Mammary epithelial cell (primary cell): ENCODE measurements at regions of chr18 and their contacts with region 1.

Region 1: GRCh38 chr18:48391868-48392267 is 17.3 kb downstream of the ZBTB7C start:
- DNase-seq: no peak
- H3K4me3 ChIP-seq: no peak overlapping the region
- H3K27ac ChIP-seq: no peak overlapping the region
- H3K4me1 ChIP-seq: peaks cover 41% of the 10 kb centered on the region
- H3K27me3 ChIP-seq: no peaks in the 10 kb centered on the region
- CTCF ChIP-seq: no peak

Region 2: DNA sequence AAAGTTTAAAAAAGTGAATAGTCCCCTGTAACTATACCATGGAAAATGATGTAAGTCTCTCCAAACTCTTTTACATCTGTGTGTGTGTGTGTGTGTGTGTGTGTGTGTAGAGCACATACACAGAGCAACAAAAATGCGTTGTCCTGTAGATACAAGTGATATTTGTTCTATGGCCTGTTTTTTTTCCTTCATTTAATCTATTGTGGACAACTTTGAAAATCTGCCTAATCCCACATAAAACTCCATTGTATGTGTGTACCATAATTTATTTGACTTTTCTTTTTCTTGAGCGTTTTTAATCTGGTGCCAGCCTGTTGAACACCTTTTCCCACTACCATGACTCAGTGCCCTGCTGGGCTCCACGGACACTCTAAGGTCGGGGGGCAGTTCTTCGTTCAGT is 1304.2 kb before region 1 on chr18:
- CTCF ChIA-PET with region 1: no interaction called
- dilution Hi-C with region 1: no loop called
- in situ Hi-C with region 1: no loop called
- intact Hi-C with region 1: no loop called
- DNase-seq: no peak
- H3K4me3 ChIP-seq: no peak overlapping the region
- H3K27ac ChIP-seq: no peak overlapping the region
- H3K4me1 ChIP-seq: no peaks in the 10 kb centered on the region
- H3K27me3 ChIP-seq: no peaks in the 10 kb centered on the region
- CTCF ChIP-seq: no peak

Region 3: GRCh38 chr18:48230467-48231113 is 161.3 kb before region 1 on chr18:
- CTCF ChIA-PET with region 1: no interaction called
- dilution Hi-C with region 1: no loop called
- in situ Hi-C with region 1: no loop called
- intact Hi-C with region 1: no loop called
- DNase-seq: peak; percentile 61
- H3K4me3 ChIP-seq: no peak overlapping the region
- H3K27ac ChIP-seq: no peak overlapping the region
- H3K4me1 ChIP-seq: peaks cover 41% of the 10 kb centered on the region
- H3K27me3 ChIP-seq: no peaks in the 10 kb centered on the region
- CTCF ChIP-seq: peak; percentile 82 to 85

Region 4: GRCh38 chr18:48404716-48405507 is 13.0 kb after region 1 on chr18:
- CTCF ChIA-PET with region 1: no interaction called
- dilution Hi-C with region 1: no loop called
- in situ Hi-C with region 1: no loop called
- intact Hi-C with region 1: loop called (anchors 1 kb)
- DNase-seq: peak; percentile 75
- H3K4me3 ChIP-seq: no peak overlapping the region
- H3K27ac ChIP-seq: no peak overlapping the region
- H3K4me1 ChIP-seq: peaks cover 40% of the 10 kb centered on the region
- H3K27me3 ChIP-seq: no peaks in the 10 kb centered on the region
- CTCF ChIP-seq: no peak

Region 5: DNA sequence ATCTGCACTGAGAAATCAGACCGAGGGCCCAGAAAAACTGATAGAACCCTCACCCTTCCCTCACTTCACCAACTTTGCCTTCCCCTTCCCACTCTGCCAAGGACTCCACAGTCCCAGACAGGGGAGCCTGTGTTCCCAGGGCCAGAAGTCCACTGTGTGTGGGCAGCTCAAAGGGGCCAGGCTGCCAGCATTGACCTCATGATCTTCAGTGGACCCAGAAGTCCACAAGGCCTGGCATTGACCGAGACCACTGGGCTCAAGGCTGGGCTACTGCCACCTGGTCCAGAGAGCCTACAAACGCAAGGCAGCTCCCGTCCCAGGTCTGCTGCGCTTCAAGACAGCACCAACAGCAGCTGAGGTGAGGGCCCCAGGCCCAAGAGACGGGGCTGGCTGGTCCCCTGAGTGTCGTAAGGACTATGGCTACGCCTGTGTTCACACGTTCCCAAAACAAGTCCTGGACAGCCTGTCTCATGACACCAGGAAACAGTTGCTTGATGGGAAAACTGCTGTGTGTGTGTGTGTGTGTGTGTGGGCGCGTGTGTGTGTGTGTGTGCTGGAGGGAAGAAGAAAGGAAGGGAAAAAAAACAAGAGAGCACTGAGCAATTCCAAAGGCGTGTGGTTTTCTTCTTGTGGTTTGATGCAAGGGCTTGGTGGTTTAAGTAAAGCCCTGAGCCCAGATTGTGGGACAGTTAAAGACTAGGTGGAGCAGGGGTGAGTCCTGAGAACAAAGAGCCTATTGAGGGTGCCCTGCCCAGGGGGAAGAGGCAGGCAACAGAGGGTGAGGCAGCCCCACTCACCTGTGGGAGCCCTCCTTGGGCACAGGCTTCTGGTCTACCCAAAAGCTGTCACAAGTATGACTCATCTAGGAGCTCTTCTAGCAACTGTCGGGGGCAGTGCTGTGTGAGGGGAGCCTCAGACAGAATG is 63.9 kb after region 1 on chr18:
- CTCF ChIA-PET with region 1: no interaction called
- dilution Hi-C with region 1: loop called (anchors 5 kb)
- in situ Hi-C with region 1: no loop called
- intact Hi-C with region 1: no loop called
- DNase-seq: peak; percentile 100
- H3K4me3 ChIP-seq: no peak overlapping the region
- H3K27ac ChIP-seq: peak overlapping the region; percentile 80
- H3K4me1 ChIP-seq: peaks cover 58% of the 10 kb centered on the region
- H3K27me3 ChIP-seq: no peaks in the 10 kb centered on the region
- CTCF ChIP-seq: no peak